ENCODE measurements at regions of chr1 and their contacts with region 1.

Region 1: DNA sequence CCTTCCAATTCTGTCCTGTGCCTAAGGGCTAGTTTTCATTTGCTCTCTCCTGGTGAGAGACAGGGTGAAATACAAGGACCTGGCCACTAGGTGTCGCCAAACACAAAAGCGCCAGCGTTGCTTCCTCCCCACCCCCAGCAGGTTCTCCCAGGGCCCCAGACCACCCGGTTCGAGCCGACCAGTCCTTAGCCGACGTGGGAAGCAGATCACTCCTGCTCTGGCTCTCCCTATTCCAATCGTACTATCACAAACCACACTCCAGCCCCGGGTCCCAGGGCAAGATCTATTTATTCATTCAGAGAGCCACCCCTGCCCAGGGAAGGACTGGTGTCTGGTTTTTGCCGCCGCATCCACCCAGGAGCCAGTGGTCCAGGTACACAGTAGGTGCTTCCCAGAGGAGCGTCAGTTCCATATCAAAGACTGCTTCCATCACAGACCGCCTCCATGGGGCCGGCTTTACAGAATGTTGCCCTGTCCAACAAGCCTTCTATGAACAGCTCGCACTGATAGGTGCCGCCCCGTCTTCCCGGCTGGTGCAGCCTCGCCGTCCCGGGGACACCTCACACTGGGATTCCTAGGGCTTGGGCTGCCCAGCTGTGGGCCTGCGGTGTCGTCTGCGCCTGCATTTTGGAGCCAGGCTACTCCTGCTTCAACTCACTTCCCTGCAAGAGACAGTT is 35.0 kb downstream of the CTNNBIP1 start:
- DNase-seq: peak; percentile 83
- H3K4me3 Mint-ChIP-seq: no peak overlapping the region
- H3K27ac Mint-ChIP-seq: no peak overlapping the region
- H3K4me1 Mint-ChIP-seq: peaks cover 4% of the 10 kb centered on the region
- H3K27me3 Mint-ChIP-seq: no peaks in the 10 kb centered on the region

Region 2: DNA sequence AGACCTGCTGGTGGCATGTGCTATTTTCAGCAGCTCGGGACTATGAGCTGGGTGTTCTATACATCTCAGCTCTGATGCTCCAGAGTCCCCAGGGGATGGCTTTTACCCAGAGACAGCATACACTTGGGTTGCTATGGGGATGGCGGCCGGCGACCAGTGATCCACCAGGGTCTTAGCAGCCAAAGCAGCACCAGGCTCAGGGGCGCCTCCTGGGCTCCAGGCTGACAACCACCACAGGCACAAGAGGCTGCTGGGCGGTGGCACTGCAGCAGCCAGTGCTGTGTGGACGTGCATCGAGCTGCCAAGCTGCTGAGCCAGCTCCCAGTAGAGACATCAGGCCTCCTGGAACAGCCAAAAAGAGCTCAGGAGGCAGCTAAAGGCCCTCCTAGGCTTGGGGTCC is 13.7 kb before region 1 on chr1:
- CTCF ChIA-PET with region 1: interaction called, 12 read pairs
- POLR2A ChIA-PET with region 1: no interaction called
- intact Hi-C with region 1: no loop called
- DNase-seq: no peak
- H3K4me3 Mint-ChIP-seq: no peak overlapping the region
- H3K27ac Mint-ChIP-seq: no peak overlapping the region
- H3K4me1 Mint-ChIP-seq: peaks cover 8% of the 10 kb centered on the region
- H3K27me3 Mint-ChIP-seq: no peaks in the 10 kb centered on the region

Region 3: DNA sequence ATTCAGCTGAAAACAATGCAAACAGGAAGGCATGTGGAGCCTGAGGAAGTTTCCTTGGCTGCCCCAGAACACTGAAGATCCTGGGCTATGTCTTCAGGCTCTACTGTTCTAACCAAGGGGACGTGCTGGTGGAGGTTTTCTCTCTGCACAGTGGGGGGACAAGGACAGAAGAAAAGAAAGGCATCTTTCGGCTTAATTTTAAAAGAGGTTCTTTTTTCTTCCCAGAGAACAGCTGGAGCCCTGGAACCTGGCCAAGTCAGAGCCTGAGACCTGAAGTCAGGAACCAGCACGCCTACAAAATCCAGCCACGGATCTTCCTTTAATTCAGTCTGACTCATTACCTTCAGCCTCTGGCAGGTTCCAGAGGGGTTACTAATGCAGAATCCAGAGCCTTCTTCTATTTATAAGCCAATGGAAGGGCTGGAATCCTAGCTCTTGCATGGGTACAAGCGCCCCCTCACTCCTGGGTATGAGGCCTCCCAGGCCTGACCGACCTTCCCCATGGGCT is 15.2 kb after region 1 on chr1:
- CTCF ChIA-PET with region 1: interaction called, 17 read pairs
- POLR2A ChIA-PET with region 1: interaction called, 3 read pairs
- intact Hi-C with region 1: no loop called
- DNase-seq: no peak
- H3K4me3 Mint-ChIP-seq: no peak overlapping the region
- H3K27ac Mint-ChIP-seq: no peak overlapping the region
- H3K4me1 Mint-ChIP-seq: peaks cover 10% of the 10 kb centered on the region
- H3K27me3 Mint-ChIP-seq: no peaks in the 10 kb centered on the region

Region 4: DNA sequence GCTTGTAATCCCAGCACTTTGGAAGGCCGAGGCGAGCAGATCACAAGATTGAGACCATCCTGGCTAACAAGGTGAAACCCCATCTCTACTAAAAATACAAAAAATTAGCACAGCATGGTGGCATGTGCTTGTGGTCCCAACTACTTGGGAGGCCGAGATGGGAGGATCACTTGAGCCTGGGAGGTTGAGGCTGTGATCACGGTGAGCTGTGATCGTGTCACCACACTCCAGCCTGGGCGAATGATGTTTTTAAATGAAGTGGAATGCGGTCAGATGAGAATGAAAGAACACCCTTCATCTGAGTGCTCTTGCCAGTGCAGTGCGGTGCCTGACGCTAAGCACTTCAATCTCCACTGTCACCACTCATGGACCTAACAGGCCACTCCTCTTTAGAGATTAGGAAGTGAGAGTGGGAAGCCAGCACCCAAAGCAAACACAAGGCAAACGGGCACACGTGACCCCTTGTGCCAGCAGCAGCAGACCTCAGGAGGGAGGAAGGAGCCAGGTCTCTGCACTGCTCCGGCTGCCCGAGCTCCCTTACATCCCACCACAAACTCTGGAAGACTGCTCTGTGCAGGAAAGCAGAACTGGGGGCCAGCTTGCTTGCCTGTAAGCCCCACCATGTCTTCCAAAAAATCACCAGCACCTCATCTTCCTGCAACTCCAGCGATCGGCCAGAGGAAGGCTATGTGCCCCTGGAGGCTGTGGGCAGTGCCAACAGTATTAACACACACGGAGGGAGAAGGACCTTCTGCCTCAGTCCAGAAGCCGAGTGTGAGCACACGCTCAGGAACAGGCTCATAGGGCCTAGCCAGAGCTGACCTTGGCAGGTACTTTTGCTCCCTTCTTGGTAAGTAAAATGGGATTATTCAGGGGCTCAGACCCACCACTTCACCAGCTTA is 25.3 kb after region 1 on chr1:
- CTCF ChIA-PET with region 1: interaction called, 5 read pairs
- POLR2A ChIA-PET with region 1: no interaction called
- intact Hi-C with region 1: loop called (anchors 1 kb)
- DNase-seq: no peak
- H3K4me3 Mint-ChIP-seq: no peak overlapping the region
- H3K27ac Mint-ChIP-seq: no peak overlapping the region
- H3K4me1 Mint-ChIP-seq: peaks cover 30% of the 10 kb centered on the region
- H3K27me3 Mint-ChIP-seq: no peaks in the 10 kb centered on the region

Region 5: GRCh38 chr1:9910425-9911178 is 35.5 kb after region 1 on chr1:
- CTCF ChIA-PET with region 1: interaction called, 5 read pairs
- POLR2A ChIA-PET with region 1: no interaction called
- intact Hi-C with region 1: loop called (anchors 2 kb)
- DNase-seq: peak; percentile 100
- H3K4me3 Mint-ChIP-seq: peak overlapping the region; percentile 94
- H3K27ac Mint-ChIP-seq: peak overlapping the region; percentile 94
- H3K4me1 Mint-ChIP-seq: peaks cover 28% of the 10 kb centered on the region
- H3K27me3 Mint-ChIP-seq: no peaks in the 10 kb centered on the region

Region 6: GRCh38 chr1:9942939-9943788 is 68.1 kb after region 1 on chr1 and contains the starts of genes LZIC and NMNAT1:
- CTCF ChIA-PET with region 1: interaction called, 7 read pairs
- POLR2A ChIA-PET with region 1: no interaction called
- intact Hi-C with region 1: loop called (anchors 1 kb)
- DNase-seq: peak; percentile 96
- H3K4me3 Mint-ChIP-seq: peak within 1 kb of the TSS; percentile 99
- H3K27ac Mint-ChIP-seq: peak within 1 kb of the TSS; percentile 91
- H3K4me1 Mint-ChIP-seq: peaks cover 20% of the 10 kb centered on the region
- H3K27me3 Mint-ChIP-seq: no peaks in the 10 kb centered on the region
- total RNA-seq, gene LZIC: 22.0 to 22.8 TPM
- total RNA-seq, gene NMNAT1: 7.8 to 9.9 TPM

Measured in activated CD4-positive, alpha-beta memory T cell treated with anti-CD3 and anti-CD28 coated beads for 36 hours (primary cell).